ENCODE measurements at regions of chr3 and their contacts with region 1.

Region 1: GRCh38 chr3:33787328-33788009 is 11.0 kb upstream of the PDCD6IP start:
- DNase-seq: peak; percentile 52 to 87 (median 65)
- H3K4me3 ChIP-seq: peak overlapping the region in 1 of 4 donors; percentile 39
- H3K27ac ChIP-seq: no peak overlapping the region
- H3K4me1 ChIP-seq: peaks cover 4 to 5% of the 10 kb centered on the region in 2 donors
- H3K27me3 ChIP-seq: no peaks in the 10 kb centered on the region
- CTCF ChIP-seq: peak; percentile 64 to 79 (median 72)
- POLR2A ChIP-seq: no peak

Region 2: GRCh38 chr3:33636125-33636850 is 151.2 kb before region 1 on chr3:
- intact Hi-C with region 1: loop called (anchors 5 kb)
- DNase-seq: peak in 2 of 7 donors; percentile 37 to 41
- H3K4me3 ChIP-seq: no peak overlapping the region
- H3K27ac ChIP-seq: no peak overlapping the region
- H3K4me1 ChIP-seq: peaks cover 0 to 5% of the 10 kb centered on the region in 2 donors
- H3K27me3 ChIP-seq: no peaks in the 10 kb centered on the region
- CTCF ChIP-seq: peak; percentile 51 to 82 (median 67)
- POLR2A ChIP-seq: no peak

Region 3: GRCh38 chr3:33717866-33718594 is 69.4 kb before region 1 on chr3 and contains the start of gene CLASP2:
- intact Hi-C with region 1: loop called in 1 of 2 experiments (anchors 5 kb)
- DNase-seq: peak; percentile 87 to 92 (median 89)
- H3K4me3 ChIP-seq: peak within 1 kb of the TSS; percentile 37 to 96 (median 83)
- H3K27ac ChIP-seq: peak within 1 kb of the TSS; percentile 83 to 100 (median 99)
- H3K4me1 ChIP-seq: peaks cover 22 to 26% of the 10 kb centered on the region in 2 donors
- H3K27me3 ChIP-seq: no peaks in the 10 kb centered on the region
- CTCF ChIP-seq: peak in 3 of 6 experiments; percentile 5 to 21 (median 21)
- POLR2A ChIP-seq: peak; percentile 35 to 83
- total RNA-seq, gene CLASP2: 47.2 to 85.4 (median 71.0) TPM